Calu3 (cell line): ENCODE measurements at regions of chr10 and their contacts with region 1.

Region 1: DNA sequence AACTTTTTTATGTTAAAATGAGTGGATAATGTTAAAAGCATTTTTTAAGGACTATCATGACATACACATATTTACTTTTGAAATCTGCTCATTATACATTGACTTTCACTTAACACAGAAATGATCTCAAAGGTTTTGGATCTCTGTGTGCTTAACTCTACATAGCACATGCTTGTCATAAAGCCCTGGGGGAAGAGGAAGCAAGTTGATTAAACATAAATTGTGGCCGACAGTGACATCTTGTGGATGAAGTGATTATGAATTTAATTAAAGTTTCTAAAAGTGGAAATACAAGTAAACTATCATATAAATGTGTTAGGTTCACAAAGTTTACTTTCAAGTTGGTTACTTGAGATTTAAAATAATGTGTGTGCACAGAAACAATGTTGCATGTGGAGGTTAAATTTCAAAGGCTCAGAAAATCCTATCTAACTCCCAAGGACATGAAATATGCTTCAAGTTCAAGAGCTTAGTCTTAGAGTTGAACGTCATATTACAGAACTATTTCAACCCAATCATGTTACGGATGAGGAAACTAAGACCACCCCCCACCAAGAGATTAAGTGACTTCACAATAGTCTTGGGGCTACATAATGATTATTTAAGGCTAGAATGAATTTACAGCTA is 1247.7 kb downstream of the GATA3 start:
- DNase-seq: peak; percentile 36
- H3K4me3 Mint-ChIP-seq: no peak overlapping the region
- H3K27ac Mint-ChIP-seq: no peak overlapping the region
- H3K4me1 Mint-ChIP-seq: peaks cover 7% of the 10 kb centered on the region
- H3K27me3 Mint-ChIP-seq: peaks cover 34% of the 10 kb centered on the region
- CTCF ChIP-seq: peak; percentile 21

Region 2: GRCh38 chr10:7756360-7756992 is 1545.8 kb before region 1 on chr10:
- CTCF ChIA-PET with region 1: no interaction called
- intact Hi-C with region 1: loop called (anchors 1 kb)
- DNase-seq: peak; percentile 47
- H3K4me3 Mint-ChIP-seq: no peak overlapping the region
- H3K27ac Mint-ChIP-seq: no peak overlapping the region
- H3K4me1 Mint-ChIP-seq: no peaks in the 10 kb centered on the region
- H3K27me3 Mint-ChIP-seq: no peaks in the 10 kb centered on the region
- CTCF ChIP-seq: peak; percentile 48

Region 3: DNA sequence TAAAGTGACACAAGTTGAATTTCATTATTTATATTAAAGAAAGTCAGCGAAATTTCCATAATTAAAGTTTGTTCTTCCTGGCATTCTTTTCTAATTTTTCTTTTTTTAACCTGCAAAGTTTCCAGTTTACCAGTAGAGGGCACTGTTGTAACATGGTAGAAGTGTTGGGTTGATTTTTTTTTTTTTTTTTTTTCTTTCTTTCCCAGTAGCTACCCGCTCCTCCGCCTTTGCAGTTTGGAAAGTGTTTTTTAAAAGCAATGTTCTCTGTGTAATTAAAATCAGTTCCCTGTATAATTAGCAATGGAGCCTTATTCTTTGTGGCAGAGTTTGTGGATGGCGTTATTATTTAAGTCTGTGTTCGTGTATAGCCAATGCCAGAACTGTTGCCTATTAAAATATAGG is 1430.2 kb before region 1 on chr10:
- CTCF ChIA-PET with region 1: no interaction called
- intact Hi-C with region 1: loop called (anchors 1 kb)
- DNase-seq: no peak
- H3K4me3 Mint-ChIP-seq: peak overlapping the region; percentile 70
- H3K27ac Mint-ChIP-seq: peak overlapping the region; percentile 62
- H3K4me1 Mint-ChIP-seq: no peaks in the 10 kb centered on the region
- H3K27me3 Mint-ChIP-seq: no peaks in the 10 kb centered on the region
- CTCF ChIP-seq: peak; percentile 53

Region 4: DNA sequence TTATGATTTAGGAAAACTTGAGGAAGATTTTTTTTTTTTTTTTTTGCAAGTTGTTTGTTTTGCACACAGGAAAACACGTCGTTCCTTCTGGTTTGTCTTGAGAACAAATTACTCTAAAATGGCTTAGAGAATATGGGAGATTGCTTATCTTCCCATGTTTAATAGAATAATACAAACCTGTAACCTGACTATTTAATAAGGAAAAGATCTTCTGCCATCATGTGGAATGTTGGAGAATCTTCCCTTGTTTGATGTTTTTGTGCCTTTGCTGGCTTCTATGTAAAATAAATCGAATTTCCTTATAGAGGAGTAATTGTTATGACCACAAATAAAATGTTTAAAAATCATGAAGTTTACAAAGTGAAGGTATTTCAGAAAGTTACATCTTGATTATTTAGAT is 428.9 kb before region 1 on chr10:
- CTCF ChIA-PET with region 1: no interaction called
- intact Hi-C with region 1: loop called (anchors 5 kb)
- DNase-seq: no peak
- H3K4me3 Mint-ChIP-seq: no peak overlapping the region
- H3K27ac Mint-ChIP-seq: peak overlapping the region; percentile 21
- H3K4me1 Mint-ChIP-seq: peaks cover 11% of the 10 kb centered on the region
- H3K27me3 Mint-ChIP-seq: no peaks in the 10 kb centered on the region
- CTCF ChIP-seq: no peak

Region 5: DNA sequence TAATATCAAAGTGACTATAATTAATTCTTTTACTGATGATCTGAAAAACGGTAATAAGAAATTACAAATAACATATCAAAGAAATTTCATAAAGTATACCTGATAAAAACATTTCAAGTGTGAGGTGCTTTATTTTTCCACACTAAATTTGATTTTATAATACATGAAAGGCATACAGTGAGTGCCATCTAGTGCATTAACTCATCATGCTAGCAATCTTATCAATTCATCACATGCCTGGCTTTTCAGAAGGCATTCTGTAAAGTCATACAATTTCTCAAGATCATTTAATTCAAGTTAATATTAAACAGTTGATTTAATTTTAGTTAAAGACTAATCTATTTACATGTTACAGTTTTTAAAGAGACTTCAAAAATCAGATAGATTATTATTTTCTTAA is 226.8 kb before region 1 on chr10:
- CTCF ChIA-PET with region 1: no interaction called
- intact Hi-C with region 1: loop called (anchors 10 kb)
- DNase-seq: no peak
- H3K4me3 Mint-ChIP-seq: no peak overlapping the region
- H3K27ac Mint-ChIP-seq: no peak overlapping the region
- H3K4me1 Mint-ChIP-seq: peaks cover 8% of the 10 kb centered on the region
- H3K27me3 Mint-ChIP-seq: no peaks in the 10 kb centered on the region
- CTCF ChIP-seq: no peak

Region 6: DNA sequence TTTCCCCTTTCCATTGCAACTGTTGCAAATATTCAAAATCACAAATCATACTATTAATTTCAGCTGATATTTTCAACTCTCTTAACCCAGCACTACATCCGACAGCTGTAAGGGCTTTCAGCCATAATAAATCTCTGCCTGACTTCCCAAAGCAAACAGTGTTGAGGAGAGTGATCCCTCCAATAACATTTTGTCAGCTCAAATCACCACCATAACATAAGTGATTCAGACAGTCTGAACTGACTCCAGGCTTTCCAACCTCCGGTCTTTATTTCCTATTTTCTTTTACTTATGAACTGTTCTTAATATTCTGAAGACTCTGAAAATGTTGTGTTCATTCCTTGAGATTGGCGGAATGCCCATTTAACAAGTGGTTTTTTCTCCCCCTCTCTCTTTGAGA is 161.9 kb before region 1 on chr10:
- CTCF ChIA-PET with region 1: no interaction called
- intact Hi-C with region 1: no loop called
- DNase-seq: no peak
- H3K4me3 Mint-ChIP-seq: no peak overlapping the region
- H3K27ac Mint-ChIP-seq: no peak overlapping the region
- H3K4me1 Mint-ChIP-seq: no peaks in the 10 kb centered on the region
- H3K27me3 Mint-ChIP-seq: no peaks in the 10 kb centered on the region
- CTCF ChIP-seq: no peak

Region 7: GRCh38 chr10:9209105-9209798 is 93.0 kb before region 1 on chr10:
- CTCF ChIA-PET with region 1: no interaction called
- intact Hi-C with region 1: loop called (anchors 2 kb)
- DNase-seq: peak; percentile 71
- H3K4me3 Mint-ChIP-seq: no peak overlapping the region
- H3K27ac Mint-ChIP-seq: no peak overlapping the region
- H3K4me1 Mint-ChIP-seq: peaks cover 8% of the 10 kb centered on the region
- H3K27me3 Mint-ChIP-seq: no peaks in the 10 kb centered on the region
- CTCF ChIP-seq: peak; percentile 70